Right cardiac atrium (tissue), 5 donors: ENCODE measurements at regions of chr20 and their contacts with region 1.

Region 1: DNA sequence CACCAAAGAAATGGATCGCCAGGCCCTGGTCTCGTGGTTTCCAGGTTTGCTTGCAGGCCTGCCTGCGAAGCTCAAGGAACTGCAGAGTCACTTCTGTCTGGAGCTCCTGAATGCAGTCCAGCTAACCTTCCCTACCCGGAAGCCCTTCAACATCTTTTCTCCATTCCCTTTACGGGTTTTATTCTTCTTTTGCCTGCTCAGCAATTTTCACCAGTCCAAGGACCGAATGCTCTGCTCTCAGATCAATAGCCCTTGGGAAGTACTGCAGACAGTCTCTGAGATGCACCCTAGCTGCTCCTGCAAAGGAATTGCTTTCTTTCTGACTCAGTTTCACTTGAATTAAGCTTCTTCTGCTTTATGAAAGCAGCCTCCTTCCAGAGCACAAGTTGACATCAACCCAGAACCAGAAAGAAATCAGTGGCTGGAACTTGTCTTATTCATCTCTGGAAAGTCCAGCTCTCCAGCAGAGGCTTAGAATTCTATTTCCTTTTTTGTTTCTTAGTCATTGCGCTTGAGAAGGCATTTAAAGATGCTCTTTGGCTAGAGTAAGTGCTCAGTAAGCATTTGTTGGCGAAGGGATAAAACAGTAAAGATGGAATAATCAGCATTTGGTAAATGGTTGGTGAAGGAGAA is 18.7 kb upstream of the YWHAB start:
- DNase-seq: no peak
- ATAC-seq: no peak
- H3K4me3 ChIP-seq: no peak overlapping the region
- H3K27ac ChIP-seq: no peak overlapping the region
- H3K4me1 ChIP-seq: no peaks in the 10 kb centered on the region
- H3K27me3 ChIP-seq: no peaks in the 10 kb centered on the region

Region 2: DNA sequence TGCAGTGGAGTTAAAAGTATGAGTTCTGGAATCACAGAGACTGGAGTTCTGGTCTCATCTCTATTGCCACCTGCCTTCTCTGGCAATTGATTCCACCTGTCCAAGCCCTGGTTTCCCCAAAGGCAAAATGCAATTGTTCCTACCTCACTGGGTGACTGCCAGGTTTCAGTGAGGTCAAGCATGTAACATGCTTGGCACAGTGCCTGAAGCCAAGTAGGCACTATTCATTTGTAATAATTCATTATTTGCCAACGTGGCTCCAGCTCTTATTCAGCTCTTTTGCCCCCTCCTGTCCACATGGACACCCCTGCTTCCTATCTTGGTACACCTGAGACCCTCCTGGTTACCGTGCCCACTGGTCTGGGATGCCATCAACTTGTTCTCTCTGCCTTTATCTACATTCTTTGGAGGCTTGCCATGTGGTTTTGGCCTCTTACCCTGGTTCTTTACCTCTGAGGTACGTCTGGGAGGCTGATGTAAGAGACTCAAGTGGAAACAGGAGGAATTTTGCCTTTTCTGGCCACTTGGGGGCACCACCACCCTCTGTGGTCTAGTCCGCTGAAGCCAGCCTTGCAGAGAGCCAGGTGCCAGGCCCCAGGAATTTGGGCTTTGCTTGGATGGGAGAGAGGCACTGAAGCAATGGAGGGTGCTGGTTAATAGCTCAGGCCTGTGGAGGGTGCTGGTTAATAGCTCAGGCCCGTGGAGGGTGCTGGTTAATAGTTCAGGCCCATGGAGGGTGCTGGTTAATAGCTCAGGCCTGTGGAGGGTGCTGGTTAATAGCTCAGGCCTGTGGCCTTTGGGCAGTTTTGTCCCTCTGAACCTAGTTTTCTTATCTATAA is 119.4 kb before region 1 on chr20:
- intact Hi-C with region 1: loop called (anchors 2 to 5 kb)
- DNase-seq: peak; percentile 74 to 91 (median 86)
- ATAC-seq: peak; percentile 44 to 57
- H3K4me3 ChIP-seq: no peak overlapping the region
- H3K27ac ChIP-seq: no peak overlapping the region
- H3K4me1 ChIP-seq: peaks cover 3% of the 10 kb centered on the region
- H3K27me3 ChIP-seq: no peaks in the 10 kb centered on the region

Region 3: DNA sequence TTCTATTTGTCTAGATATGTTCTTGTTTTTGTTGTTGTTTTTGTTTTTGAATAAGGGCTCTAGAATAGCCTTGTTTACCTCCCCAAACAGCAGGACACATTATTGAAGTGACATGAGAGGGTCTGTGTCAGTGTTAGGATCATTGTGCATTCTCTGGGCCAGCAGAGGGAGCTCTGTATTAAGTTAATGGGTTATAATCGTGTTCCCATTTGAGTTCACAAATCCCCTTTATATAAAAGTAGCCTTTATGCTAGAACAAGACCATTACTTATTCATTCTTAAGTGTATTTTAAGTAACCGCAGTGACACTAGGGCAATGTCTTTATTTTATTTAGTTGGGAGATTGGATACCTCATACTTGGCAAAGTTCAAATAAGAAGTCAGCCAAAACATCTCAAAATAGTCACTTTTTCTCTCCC is 144.3 kb after region 1 on chr20:
- intact Hi-C with region 1: no loop called
- DNase-seq: peak in 2 of 3 donors; percentile 33 to 65
- ATAC-seq: peak; percentile 71 to 72
- H3K4me3 ChIP-seq: no peak overlapping the region
- H3K27ac ChIP-seq: no peak overlapping the region
- H3K4me1 ChIP-seq: no peaks in the 10 kb centered on the region
- H3K27me3 ChIP-seq: no peaks in the 10 kb centered on the region